ENCODE measurements at regions of chr11 and their contacts with region 1.

Region 1: GRCh38 chr11:73280651-73281071 is 8.5 kb downstream of the P2RY6 start:
- DNase-seq: peak in 1 of 2 experiments; percentile 39
- H3K4me3 ChIP-seq: no peak overlapping the region
- H3K4me3 Mint-ChIP-seq: no peak overlapping the region
- H3K27ac Mint-ChIP-seq: peak overlapping the region; percentile 5
- H3K4me1 ChIP-seq: peaks cover 78% of the 10 kb centered on the region
- H3K4me1 Mint-ChIP-seq: peaks cover 51% of the 10 kb centered on the region
- H3K27me3 ChIP-seq: no peaks in the 10 kb centered on the region
- H3K27me3 Mint-ChIP-seq: no peaks in the 10 kb centered on the region
- CTCF ChIP-seq: no peak

Region 2: DNA sequence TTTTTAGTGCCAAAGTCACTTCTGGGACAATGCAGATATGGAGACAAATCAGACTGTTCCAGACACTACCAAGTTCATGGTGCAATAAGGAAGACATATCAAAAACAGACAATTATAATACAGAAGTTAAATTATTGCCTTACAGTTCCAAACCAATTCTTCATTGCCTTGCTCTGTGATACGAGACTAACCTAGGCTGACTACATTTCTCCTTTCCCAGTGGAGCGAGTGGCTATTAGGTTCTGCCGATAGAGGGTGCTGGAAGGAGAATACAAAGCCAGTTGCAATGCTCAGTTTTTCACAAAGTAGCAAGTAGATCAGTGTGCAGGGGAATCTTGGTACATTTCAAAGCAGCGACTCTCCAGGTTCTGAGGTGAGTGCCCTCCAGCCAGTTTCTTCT is 249.4 kb after region 1 on chr11:
- CTCF ChIA-PET with region 1: no interaction called
- POLR2A ChIA-PET with region 1: interaction called, 11 read pairs
- intact Hi-C with region 1: no loop called
- DNase-seq: peak in 1 of 2 experiments; percentile 19
- H3K4me3 ChIP-seq: no peak overlapping the region
- H3K4me3 Mint-ChIP-seq: no peak overlapping the region
- H3K27ac Mint-ChIP-seq: no peak overlapping the region
- H3K4me1 ChIP-seq: peaks cover 15% of the 10 kb centered on the region
- H3K4me1 Mint-ChIP-seq: peaks cover 9% of the 10 kb centered on the region
- H3K27me3 ChIP-seq: no peaks in the 10 kb centered on the region
- H3K27me3 Mint-ChIP-seq: no peaks in the 10 kb centered on the region
- CTCF ChIP-seq: peak in 1 of 2 experiments; percentile 28